ENCODE measurements at regions of chr15 and their contacts with region 1.

Region 1: GRCh38 chr15:100918034-100918689 is 995 bp upstream of the LRRK1 start:
- DNase-seq: peak; percentile 14 to 79 (median 60)

Region 2: DNA sequence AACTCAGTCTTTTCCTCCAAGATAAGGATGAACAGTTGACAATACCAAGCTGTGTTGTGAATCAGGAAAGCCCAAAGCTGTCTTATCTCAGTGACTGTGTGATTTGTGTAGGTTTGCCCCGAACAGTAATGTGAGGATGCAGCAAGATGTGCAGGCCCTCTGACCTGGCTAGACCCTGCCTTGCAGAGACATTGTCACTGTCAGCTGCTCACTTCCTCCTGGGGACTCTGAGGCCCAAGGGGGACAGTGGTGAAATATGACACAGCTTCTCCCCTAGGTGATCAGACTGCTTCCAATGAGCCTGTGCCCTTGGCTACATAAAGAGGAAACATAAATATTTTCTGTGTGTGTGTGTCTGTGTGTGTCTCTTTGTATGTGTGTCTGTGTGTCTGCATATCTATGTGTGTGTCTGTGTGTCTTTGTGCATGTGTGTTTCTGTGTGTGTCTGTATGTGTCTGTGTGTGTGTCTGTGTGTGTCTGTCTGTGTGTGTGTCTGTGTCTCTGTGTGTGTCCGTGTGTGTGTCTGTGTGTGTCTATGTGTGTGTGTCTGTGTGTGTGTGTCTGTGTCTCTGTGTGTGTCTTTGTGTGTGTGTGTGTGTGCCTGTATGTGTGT is 22.7 kb after region 1 on chr15:
- intact Hi-C with region 1: no loop called
- DNase-seq: no peak

Region 3: DNA sequence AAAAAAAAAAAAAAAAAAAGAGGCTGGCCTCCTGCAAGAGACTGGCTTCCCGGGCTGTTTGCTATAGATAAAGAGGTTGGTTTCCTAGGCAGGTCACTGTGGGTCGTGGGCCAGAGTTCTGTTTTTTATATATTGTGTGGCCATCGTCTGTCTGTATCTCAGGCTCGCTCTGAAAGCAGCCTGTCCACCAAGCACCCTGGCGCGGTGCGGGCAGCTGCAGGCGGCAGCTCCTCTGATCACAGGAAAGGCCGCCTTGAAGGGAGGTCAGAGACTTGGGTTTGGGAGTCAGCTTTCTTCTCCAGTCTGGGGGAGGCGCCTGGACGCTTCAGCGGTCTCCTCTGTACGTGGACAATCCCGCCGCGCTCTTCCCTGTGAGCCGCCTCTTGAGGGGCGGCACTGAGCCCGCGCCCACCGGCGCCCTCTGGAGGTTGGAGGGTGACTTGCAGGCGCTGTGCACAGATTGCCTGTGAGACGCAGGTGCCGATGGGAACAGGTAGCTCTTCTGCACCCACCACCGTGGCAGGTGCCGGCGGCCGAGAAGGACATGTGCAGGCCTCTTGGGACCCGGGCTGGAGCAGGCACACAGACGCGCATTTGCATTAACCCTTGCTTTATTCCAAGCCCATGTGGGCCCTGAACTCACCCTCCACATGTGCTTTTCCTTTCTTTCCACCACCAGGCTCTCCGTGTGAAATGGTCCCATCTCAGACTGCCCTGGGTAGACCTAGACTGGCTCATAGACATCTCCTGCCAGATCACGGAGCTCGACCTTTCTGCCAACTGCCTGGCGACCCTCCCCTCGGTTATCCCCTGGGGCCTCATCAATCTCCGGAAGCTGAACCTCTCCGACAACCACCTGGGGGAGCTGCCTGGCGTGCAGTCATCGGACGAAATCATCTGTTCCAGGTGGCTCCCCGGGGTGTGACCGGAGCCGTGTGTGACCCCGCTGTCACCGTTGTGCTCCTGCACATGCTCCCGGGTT is 90.3 kb after region 1 on chr15:
- intact Hi-C with region 1: loop called (anchors 10 kb)
- DNase-seq: peak; percentile 47 to 90 (median 81)

Region 4: GRCh38 chr15:101115786-101116680 is 197.9 kb after region 1 on chr15:
- intact Hi-C with region 1: no loop called
- DNase-seq: peak in 40 of 42 donors; percentile 19 to 74 (median 48)